Mammary epithelial cell (primary cell): ENCODE measurements at regions of chr19 and their contacts with region 1.

Region 1: DNA sequence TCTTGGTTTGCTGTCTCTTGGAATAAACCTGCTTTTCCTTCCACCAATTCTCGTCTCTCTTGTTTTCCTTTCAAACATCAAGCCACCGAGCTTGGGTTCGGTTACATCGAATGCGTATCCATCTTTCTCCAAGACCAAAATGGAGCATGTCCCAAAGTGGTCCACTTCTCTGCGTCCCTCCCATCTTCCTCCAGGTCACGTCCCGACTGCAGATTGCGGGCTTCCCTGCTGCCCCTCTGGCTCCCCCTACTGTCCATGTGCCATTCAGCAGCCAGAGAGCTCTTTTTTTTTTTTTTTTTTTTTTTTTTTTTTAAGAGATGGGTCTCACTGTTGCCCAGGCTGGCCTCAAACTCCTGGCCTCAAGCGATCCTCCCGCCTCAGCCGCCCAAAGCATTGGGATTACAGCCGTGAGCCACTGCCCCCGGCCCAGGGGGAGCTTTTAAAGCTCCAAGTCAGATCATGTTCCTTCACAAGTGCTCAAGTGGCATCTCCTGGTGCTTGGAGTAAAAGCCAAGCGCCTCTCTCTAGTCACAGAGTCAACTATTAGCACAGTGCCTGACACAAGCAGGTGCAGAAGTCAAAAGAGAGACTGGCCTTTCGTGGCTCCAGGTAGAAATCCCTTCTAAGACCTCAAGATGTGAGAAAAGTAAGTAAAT is 10.0 kb downstream of the COL5A3 start:
- DNase-seq: peak; percentile 34
- H3K4me3 ChIP-seq: no peak overlapping the region
- H3K27ac ChIP-seq: no peak overlapping the region
- H3K4me1 ChIP-seq: no peaks in the 10 kb centered on the region
- H3K27me3 ChIP-seq: no peaks in the 10 kb centered on the region
- CTCF ChIP-seq: peak; percentile 79 to 88

Region 2: DNA sequence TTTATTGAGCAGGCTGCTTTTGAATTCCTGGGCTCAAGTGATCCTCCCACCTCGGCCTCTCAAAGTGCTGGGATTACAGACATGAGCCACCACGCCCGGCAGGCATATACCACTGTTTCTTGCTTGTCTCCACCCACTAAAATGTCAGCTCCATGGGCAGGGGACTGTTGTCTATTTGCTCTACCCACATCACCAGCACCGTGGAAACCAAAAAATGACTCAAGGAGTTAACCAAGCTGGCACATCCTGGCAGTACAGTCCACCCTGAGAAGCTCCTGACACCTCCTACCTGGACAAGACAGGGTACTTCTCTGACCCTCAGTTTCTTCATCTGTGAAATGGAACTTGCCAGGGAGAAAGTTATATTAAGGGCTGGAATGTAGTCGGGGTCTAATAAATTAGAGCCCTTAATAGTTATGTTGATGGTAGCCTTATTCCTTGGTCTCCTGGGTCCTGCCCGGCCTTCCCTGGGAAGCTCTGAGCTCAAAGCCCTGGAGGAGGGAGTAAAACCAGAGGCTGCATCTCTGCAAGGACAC is 26.9 kb after region 1 on chr19:
- CTCF ChIA-PET with region 1: interaction called, 17 read pairs
- dilution Hi-C with region 1: no loop called
- in situ Hi-C with region 1: no loop called
- intact Hi-C with region 1: loop called (anchors 1 kb)
- DNase-seq: peak; percentile 60
- H3K4me3 ChIP-seq: no peak overlapping the region
- H3K27ac ChIP-seq: no peak overlapping the region
- H3K4me1 ChIP-seq: peaks cover 11% of the 10 kb centered on the region
- H3K27me3 ChIP-seq: peaks cover 4% of the 10 kb centered on the region
- CTCF ChIP-seq: no peak

Region 3: DNA sequence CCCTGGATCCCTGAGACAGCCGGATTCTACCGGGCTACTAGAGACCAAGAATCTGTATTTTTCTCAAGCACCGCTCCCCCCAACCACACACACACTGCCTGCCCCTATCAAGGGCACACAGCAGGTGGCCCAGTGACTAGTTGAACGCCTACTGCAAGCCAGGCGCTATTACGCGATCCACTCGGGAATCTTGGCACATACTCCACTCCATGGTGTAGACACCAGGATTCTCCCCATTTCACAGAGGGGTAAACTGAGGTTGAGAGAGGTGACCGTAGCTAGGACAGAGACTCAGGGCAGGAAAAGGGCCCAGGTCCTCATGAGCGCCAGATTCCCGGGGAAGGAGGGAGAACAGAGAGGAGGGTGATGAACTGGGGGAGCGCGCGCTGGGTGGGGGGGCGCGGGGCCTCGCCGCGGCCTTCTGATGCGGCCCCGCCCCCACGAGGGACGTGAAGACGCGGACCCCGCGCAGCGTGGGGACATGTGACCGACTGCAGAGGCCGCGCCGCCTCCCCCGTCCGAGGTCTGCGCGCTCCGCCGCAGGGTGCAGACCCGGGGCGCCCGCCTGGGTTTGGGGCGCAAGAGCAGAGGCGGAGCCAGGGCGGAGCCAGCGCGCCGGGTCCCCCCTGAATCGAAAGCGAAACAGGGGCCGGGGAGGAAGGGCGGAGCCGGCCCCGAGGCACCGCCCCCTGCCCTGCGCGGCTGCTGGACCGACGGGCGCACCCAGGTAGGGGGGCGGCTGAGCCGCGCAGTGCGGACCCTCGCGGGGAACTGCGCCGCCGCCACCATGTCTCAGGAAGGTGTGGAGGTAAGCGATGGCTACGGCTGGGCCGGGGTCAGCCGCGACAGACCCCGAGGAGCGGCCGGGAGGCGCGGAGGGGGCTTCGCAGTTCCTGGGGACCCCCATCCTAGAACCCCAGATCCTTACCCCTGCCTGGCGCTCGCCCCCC is 85.6 kb after region 1 on chr19 and contains the start of gene SHFL:
- CTCF ChIA-PET with region 1: no interaction called
- dilution Hi-C with region 1: no loop called
- in situ Hi-C with region 1: no loop called
- intact Hi-C with region 1: no loop called
- DNase-seq: peak; percentile 52
- H3K4me3 ChIP-seq: peak within 1 kb of the TSS; percentile 91 to 97 (median 92)
- H3K27ac ChIP-seq: peak within 1 kb of the TSS; percentile 23
- H3K4me1 ChIP-seq: peaks cover 4% of the 10 kb centered on the region
- H3K27me3 ChIP-seq: no peaks in the 10 kb centered on the region
- CTCF ChIP-seq: no peak
- total RNA-seq, gene SHFL: 14.3 to 22.4 TPM

Region 4: GRCh38 chr19:10701955-10702525 is 701.7 kb after region 1 on chr19:
- CTCF ChIA-PET with region 1: interaction called, 11 read pairs
- dilution Hi-C with region 1: no loop called
- in situ Hi-C with region 1: no loop called
- intact Hi-C with region 1: no loop called
- DNase-seq: no peak
- H3K4me3 ChIP-seq: peak overlapping the region; percentile 34 to 83 (median 76)
- H3K27ac ChIP-seq: no peak overlapping the region
- H3K4me1 ChIP-seq: peaks cover 3% of the 10 kb centered on the region
- H3K27me3 ChIP-seq: no peaks in the 10 kb centered on the region
- CTCF ChIP-seq: no peak